Endothelial cell of umbilical vein (primary cell): ENCODE measurements at regions of chr11 and their contacts with region 1.

Region 1: DNA sequence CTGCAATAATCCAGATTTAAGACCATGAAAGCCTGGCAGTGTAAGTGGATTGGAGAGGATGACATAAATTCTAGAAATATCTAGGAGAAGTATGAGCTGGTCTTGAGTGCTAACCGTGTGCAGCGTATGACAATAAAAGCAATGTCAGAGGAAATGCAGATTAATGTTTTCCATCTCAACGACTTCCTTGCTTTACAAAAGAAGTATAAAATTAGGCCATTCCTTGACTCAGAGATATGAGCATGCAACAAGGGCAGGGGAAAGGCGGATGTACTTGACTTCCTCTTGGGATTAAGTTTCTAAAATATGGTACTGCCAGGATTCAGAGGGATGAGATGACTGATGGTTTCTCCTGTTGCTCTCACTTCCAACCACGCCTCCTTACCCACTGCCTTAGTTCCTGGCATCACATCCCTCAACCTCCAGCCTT is 32.3 kb downstream of the ADAMTS15 start:
- DNase-seq: peak; percentile 80
- H3K4me3 ChIP-seq: no peak overlapping the region
- H3K27ac ChIP-seq: no peak overlapping the region
- H3K4me1 ChIP-seq: peaks cover 28% of the 10 kb centered on the region
- H3K27me3 ChIP-seq: peaks cover 23 to 38% of the 10 kb centered on the region in 2 experiments
- CTCF ChIP-seq: no peak
- POLR2A ChIP-seq: no peak

Region 2: DNA sequence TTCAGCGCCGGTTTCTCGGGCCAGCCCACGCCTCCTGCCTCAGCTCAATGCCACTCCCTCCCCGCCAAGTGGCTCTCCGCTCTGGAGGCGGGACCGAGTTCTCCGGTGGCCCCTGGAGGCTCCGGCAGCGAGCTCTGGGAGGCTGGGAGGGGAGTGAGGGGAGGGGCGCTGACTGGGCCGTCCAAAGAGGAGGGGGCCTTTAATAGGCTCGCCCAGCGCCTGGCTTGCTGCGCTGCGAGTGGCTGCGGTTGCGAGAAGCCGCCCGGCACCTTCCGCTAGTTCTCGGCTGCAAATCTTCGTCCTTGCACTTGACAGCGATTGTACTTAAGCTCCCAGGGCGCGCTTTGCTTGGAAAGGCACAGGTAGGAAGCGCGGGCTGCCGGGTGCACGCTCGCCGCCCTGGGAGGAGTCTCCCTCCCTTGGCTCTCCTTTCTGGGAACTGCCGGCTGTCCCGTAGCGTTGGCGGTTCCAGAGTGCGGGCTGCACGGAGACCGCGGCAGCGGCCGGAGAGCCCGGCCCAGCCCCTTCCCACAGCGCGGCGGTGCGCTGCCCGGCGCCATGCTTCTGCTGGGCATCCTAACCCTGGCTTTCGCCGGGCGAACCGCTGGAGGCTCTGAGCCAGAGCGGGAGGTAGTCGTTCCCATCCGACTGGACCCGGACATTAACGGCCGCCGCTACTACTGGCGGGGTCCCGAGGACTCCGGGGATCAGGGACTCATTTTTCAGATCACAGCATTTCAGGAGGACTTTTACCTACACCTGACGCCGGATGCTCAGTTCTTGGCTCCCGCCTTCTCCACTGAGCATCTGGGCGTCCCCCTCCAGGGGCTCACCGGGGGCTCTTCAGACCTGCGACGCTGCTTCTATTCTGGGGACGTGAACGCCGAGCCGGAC is 32.1 kb before region 1 on chr11 and contains the start of gene ADAMTS15:
- CTCF ChIA-PET with region 1: no interaction called
- POLR2A ChIA-PET with region 1: no interaction called
- dilution Hi-C with region 1: no loop called
- intact Hi-C with region 1: loop called (anchors 1 kb)
- DNase-seq: peak; percentile 70
- H3K4me3 ChIP-seq: peak within 1 kb of the TSS in 2 of 3 experiments; percentile 0 to 32
- H3K27ac ChIP-seq: no peak within 1 kb of the TSS
- H3K4me1 ChIP-seq: no peaks in the 10 kb centered on the region
- H3K27me3 ChIP-seq: peaks cover 24 to 25% of the 10 kb centered on the region in 2 experiments
- CTCF ChIP-seq: no peak
- POLR2A ChIP-seq: no peak
- total RNA-seq, gene ADAMTS15: not detected in 2 replicates

Region 3: GRCh38 chr11:130469181-130469580 is 11.5 kb before region 1 on chr11:
- CTCF ChIA-PET with region 1: no interaction called
- POLR2A ChIA-PET with region 1: no interaction called
- dilution Hi-C with region 1: no loop called
- intact Hi-C with region 1: no loop called
- DNase-seq: no peak
- H3K4me3 ChIP-seq: no peak overlapping the region
- H3K27ac ChIP-seq: no peak overlapping the region
- H3K4me1 ChIP-seq: no peaks in the 10 kb centered on the region
- H3K27me3 ChIP-seq: peaks cover 0 to 2% of the 10 kb centered on the region in 2 experiments
- CTCF ChIP-seq: no peak
- POLR2A ChIP-seq: no peak

Region 4: DNA sequence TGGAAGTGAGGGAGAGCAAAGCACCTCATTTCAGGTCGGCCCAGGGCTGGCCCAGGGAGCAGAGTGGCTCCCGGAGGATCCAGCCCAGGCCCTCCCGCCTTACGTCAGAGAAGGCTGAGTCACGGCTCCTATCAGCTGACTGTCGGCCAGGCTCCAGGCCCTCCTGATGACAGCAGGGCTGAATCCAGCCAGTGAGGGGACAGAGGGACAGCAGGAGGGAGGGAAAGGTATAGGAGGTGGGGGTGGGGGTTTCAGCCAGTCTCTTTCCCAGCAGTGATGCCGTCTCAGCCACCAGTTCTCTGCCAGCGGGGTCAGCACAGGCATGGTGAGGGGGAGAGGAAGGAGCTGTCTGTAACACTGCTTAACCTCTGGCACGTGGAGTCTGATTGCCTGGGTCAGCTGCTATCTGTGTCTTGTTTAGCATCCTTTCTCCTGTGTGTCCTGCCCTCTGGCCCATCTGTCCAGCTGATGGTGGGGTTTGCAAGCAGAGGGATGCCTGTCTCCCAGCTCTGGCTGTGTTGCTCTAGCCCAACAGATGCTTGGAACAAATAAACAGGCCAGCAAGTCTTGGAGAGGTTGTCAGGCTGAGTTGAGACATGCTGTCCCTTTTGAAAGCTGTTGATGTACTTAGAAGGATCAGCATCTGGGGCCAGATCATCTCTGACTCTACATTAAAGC is 41.7 kb after region 1 on chr11:
- CTCF ChIA-PET with region 1: no interaction called
- POLR2A ChIA-PET with region 1: no interaction called
- dilution Hi-C with region 1: no loop called
- intact Hi-C with region 1: loop called (anchors 2 kb)
- DNase-seq: peak; percentile 83
- H3K4me3 ChIP-seq: no peak overlapping the region
- H3K27ac ChIP-seq: no peak overlapping the region
- H3K4me1 ChIP-seq: peaks cover 4% of the 10 kb centered on the region
- H3K27me3 ChIP-seq: no peaks in the 10 kb centered on the region
- CTCF ChIP-seq: no peak
- POLR2A ChIP-seq: no peak

Region 5: DNA sequence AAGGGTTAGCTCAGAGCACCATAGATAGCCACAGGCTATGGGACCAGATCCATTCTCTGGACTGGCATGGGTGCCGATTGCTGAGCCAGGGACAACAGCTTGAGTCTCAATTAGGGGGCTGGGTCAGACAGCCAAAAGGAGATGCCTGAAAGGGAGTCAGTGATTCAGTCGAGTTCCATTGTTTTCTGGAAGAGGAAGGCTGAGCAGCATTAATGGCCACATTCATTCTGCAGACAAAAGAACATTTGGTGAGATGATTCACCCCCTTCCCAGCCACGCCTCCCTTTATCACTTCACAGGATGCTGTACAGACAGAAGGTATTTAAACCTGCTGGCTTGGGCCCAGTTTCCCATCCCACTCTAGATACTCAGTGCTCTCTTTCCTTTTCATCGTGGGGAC is 99.6 kb after region 1 on chr11:
- CTCF ChIA-PET with region 1: no interaction called
- POLR2A ChIA-PET with region 1: no interaction called
- dilution Hi-C with region 1: no loop called
- intact Hi-C with region 1: loop called (anchors 2 kb)
- DNase-seq: peak; percentile 61
- H3K4me3 ChIP-seq: no peak overlapping the region
- H3K27ac ChIP-seq: peak overlapping the region; percentile 24
- H3K4me1 ChIP-seq: peaks cover 10% of the 10 kb centered on the region
- H3K27me3 ChIP-seq: no peaks in the 10 kb centered on the region
- CTCF ChIP-seq: no peak
- POLR2A ChIP-seq: no peak

Region 6: DNA sequence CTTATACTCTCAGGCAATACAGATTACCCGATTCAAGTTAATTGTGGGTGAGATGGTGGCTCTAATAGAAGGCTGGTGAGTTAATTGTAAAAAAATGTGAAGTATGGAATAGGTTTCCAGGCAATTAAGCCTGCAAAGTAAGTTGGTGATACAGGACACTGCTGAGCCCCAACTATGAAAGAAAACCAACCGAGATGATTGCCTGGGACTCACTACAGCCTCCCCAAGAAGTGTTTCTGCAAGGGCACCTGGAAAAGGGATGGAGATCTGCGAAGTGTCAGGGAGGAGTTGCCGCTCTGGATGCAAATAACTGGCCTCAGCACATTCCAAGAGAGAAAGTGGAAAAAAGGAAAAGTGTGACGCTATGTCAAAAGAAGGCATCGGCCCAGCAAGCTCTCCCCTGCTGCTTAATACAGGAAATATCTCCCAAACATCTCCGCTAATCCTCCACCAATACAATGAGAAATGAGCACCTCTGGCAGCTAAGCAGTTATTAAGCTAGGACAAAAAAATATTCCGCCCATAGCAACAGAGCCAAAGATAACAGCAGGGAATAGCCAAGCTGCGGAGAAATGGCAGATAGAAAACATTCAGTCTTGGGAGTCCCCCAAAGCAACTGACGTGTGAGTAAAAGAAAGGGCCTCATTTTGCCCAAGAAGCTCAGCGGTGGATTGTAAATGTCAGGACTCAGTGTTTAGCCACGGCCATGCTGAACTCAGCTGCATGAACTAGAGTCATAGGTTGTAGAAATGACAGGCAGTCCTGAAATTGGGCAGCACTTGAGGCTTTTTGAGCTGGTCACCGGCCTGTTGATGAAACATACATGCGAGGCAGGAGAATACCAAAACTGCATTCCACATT is 301.9 kb after region 1 on chr11:
- CTCF ChIA-PET with region 1: no interaction called
- POLR2A ChIA-PET with region 1: no interaction called
- dilution Hi-C with region 1: no loop called
- intact Hi-C with region 1: loop called (anchors 5 kb)
- DNase-seq: peak; percentile 66
- H3K4me3 ChIP-seq: no peak overlapping the region
- H3K27ac ChIP-seq: peak overlapping the region; percentile 23
- H3K4me1 ChIP-seq: peaks cover 23% of the 10 kb centered on the region
- H3K27me3 ChIP-seq: no peaks in the 10 kb centered on the region
- CTCF ChIP-seq: no peak
- POLR2A ChIP-seq: no peak